Dendritic cell treated with granulocyte-macrophage colony-stimulating factor and Interleukin-4, amounts not matched to agents 40 ng/mL and 50 ng/mL, for 4 days (primary cell): ENCODE measurements at regions of chr4 and their contacts with region 1.

Region 1: DNA sequence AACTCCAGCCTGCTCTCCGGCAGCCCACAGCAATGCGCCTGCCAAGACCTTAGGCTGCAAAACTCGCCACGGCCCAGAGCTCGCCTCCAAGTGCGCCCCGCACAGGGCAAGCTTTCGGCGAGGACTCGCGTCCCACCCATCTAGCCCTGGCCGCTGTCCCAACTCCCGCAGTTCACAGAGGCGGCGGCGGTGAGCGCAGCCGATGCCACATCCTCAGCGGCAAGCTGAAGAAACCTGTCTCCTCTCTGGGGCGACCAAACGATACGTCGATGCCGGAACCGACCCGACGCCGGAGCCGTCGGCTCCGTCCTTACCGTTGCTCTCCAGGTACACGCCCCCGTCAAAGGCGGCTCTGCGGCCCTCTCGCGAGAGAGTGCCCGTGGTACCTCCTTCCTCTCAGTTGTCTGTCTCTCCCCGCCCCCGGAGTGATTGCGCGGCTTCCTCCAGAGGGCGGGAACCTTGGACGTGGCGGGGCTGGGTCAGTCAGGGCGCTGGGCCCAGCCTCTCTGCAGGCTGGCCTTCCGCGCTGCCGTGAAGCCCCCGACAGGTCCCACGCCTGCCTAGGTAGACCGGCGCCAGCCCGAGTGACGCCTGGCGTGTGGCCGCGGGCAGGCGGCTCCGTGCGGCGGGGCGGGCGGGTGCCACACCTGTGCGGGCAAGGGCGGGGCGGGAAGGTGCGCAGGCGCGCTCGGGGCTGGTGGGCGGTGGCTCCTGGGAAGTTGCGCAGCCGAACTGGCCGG is 380 bp upstream of the RAB33B start:
- H3K4me3 Mint-ChIP-seq: peak overlapping the region; percentile 89
- H3K27ac Mint-ChIP-seq: peak overlapping the region; percentile 95
- H3K4me1 Mint-ChIP-seq: peaks cover 47% of the 10 kb centered on the region
- H3K27me3 Mint-ChIP-seq: no peaks in the 10 kb centered on the region

Region 2: GRCh38 chr4:139301113-139301820 is 152.3 kb before region 1 on chr4 and contains the start of gene NAA15:
- intact Hi-C with region 1: loop called (anchors 5 kb)
- H3K4me3 Mint-ChIP-seq: peak within 1 kb of the TSS; percentile 89
- H3K27ac Mint-ChIP-seq: peak within 1 kb of the TSS; percentile 92
- H3K4me1 Mint-ChIP-seq: peaks cover 32% of the 10 kb centered on the region
- H3K27me3 Mint-ChIP-seq: no peaks in the 10 kb centered on the region

Region 3: GRCh38 chr4:139416073-139416673 is 37.4 kb before region 1 on chr4:
- intact Hi-C with region 1: loop called (anchors 5 kb)
- H3K4me3 Mint-ChIP-seq: no peak overlapping the region
- H3K27ac Mint-ChIP-seq: no peak overlapping the region
- H3K4me1 Mint-ChIP-seq: peaks cover 28% of the 10 kb centered on the region
- H3K27me3 Mint-ChIP-seq: no peaks in the 10 kb centered on the region

Region 4: DNA sequence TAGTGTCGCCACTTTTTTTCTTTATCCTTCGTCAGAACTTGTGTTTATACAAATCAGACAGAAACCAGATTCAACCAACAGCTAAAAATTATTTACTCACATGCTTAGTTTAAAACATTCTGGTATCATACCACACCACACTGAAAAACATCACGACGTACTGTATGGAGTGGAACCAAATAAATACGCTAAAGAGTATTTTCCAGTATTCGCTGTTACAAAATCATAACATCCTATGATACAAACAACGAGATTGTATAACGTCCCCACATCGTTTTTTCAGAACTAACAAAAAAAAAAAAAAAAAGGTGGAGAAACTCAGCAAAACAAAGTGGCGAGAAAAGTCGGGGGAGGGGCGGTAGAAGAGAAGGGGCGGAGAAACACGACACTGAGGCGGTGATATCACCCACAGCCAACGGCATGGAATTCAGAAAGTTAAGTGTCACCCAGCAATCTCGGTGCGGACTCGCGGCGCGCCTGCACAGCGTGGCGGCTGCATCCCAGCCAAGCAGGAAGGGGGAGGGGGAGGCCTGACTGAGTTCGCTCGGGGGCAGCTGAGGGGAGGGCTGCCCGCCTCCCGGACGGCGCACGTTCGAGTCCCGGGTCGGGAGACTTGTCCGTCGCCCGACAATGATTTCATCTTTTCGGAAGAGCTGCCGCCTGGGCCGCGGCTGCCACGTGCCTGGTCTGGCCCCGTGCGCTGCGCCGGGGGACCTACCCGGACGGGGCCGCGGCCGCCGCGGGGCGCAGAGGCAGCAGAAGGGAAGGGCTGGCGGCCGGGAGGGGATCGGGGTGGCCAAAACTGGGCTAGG is 101.6 kb after region 1 on chr4:
- intact Hi-C with region 1: loop called (anchors 10 kb)
- H3K4me3 Mint-ChIP-seq: peak overlapping the region; percentile 95
- H3K27ac Mint-ChIP-seq: peak overlapping the region; percentile 97
- H3K4me1 Mint-ChIP-seq: peaks cover 45% of the 10 kb centered on the region
- H3K27me3 Mint-ChIP-seq: peaks cover 7% of the 10 kb centered on the region